PC-3 (cell line): ENCODE measurements at regions of chr3 and their contacts with region 1.

Region 1: GRCh38 chr3:168341956-168342936 is 246.5 kb upstream of the GOLIM4 start:
- DNase-seq: peak; percentile 61
- ATAC-seq: peak; percentile 77
- H3K4me3 ChIP-seq: peak overlapping the region; percentile 29
- H3K27ac ChIP-seq: peak overlapping the region; percentile 48
- H3K4me1 ChIP-seq: peaks cover 38% of the 10 kb centered on the region
- H3K27me3 ChIP-seq: no peaks in the 10 kb centered on the region
- CTCF ChIP-seq: no peak

Region 2: GRCh38 chr3:168288511-168289401 is 53.5 kb before region 1 on chr3:
- CTCF ChIA-PET with region 1: no interaction called
- POLR2A ChIA-PET with region 1: no interaction called
- intact Hi-C with region 1: no loop called
- DNase-seq: no peak
- ATAC-seq: no peak
- H3K4me3 ChIP-seq: no peak overlapping the region
- H3K27ac ChIP-seq: no peak overlapping the region
- H3K4me1 ChIP-seq: no peaks in the 10 kb centered on the region
- H3K27me3 ChIP-seq: no peaks in the 10 kb centered on the region
- CTCF ChIP-seq: no peak

Region 3: GRCh38 chr3:168307893-168308292 is 34.4 kb before region 1 on chr3:
- CTCF ChIA-PET with region 1: no interaction called
- POLR2A ChIA-PET with region 1: interaction called, 3 read pairs
- intact Hi-C with region 1: loop called (anchors 1 kb)
- DNase-seq: peak; percentile 30
- ATAC-seq: peak; percentile 91
- H3K4me3 ChIP-seq: no peak overlapping the region
- H3K27ac ChIP-seq: no peak overlapping the region
- H3K4me1 ChIP-seq: peaks cover 11% of the 10 kb centered on the region; the same call in 1 of the 2 replicates
- H3K27me3 ChIP-seq: no peaks in the 10 kb centered on the region
- CTCF ChIP-seq: no peak

Region 4: GRCh38 chr3:168425936-168426595 is 83.8 kb after region 1 on chr3:
- CTCF ChIA-PET with region 1: no interaction called
- POLR2A ChIA-PET with region 1: no interaction called
- intact Hi-C with region 1: loop called (anchors 1 kb)
- DNase-seq: peak; percentile 89
- ATAC-seq: peak; percentile 81
- H3K4me3 ChIP-seq: no peak overlapping the region
- H3K27ac ChIP-seq: peak overlapping the region; percentile 80
- H3K4me1 ChIP-seq: peaks cover 37% of the 10 kb centered on the region
- H3K27me3 ChIP-seq: no peaks in the 10 kb centered on the region
- CTCF ChIP-seq: no peak